ENCODE measurements at regions of chr2 and their contacts with region 1.

Region 1: DNA sequence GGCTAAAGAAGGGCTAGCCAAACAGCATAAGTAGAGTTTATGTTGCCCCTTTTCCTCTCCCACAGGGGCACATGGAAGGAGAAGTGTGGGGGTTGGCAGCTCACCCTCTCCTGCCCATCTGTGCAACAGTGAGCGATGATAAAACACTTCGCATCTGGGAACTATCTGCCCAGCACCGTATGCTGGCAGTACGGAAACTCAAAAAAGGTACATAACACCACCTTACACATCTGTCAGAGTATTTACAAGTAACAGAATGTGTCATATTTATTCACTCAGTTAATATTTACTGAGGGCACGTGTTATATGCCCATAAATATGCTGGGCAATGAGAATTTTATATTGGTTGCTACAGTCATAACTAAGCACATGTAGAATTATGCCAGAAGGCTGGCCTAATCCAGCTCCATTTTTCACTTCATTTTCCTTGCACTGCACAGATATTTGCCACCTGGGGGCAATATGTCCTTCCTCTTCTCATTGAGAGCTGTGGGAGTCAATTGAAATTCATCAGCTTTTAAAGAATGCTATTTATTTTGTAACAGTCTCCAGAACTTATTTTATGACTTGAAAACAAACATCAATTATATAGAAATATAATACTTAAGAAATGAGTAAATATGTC is 150.6 kb downstream of the RTN4 start:
- DNase-seq: no peak
- H3K4me3 Mint-ChIP-seq: no peak overlapping the region
- H3K27ac Mint-ChIP-seq: no peak overlapping the region
- H3K4me1 Mint-ChIP-seq: peaks cover 29% of the 10 kb centered on the region
- H3K27me3 Mint-ChIP-seq: no peaks in the 10 kb centered on the region

Region 2: GRCh38 chr2:54723131-54723995 is 176.3 kb before region 1 on chr2 and contains the start of gene EML6:
- CTCF ChIA-PET with region 1: no interaction called
- POLR2A ChIA-PET with region 1: no interaction called
- intact Hi-C with region 1: no loop called
- DNase-seq: peak; percentile 99
- H3K4me3 Mint-ChIP-seq: peak within 1 kb of the TSS; percentile 85
- H3K27ac Mint-ChIP-seq: peak within 1 kb of the TSS; percentile 34
- H3K4me1 Mint-ChIP-seq: peaks cover 12% of the 10 kb centered on the region
- H3K27me3 Mint-ChIP-seq: peaks cover 31% of the 10 kb centered on the region
- total RNA-seq, gene EML6: 0.46 to 0.50 TPM

Region 3: GRCh38 chr2:54866868-54867267 is 32.8 kb before region 1 on chr2:
- CTCF ChIA-PET with region 1: no interaction called
- POLR2A ChIA-PET with region 1: no interaction called
- intact Hi-C with region 1: no loop called
- DNase-seq: no peak
- H3K4me3 Mint-ChIP-seq: no peak overlapping the region
- H3K27ac Mint-ChIP-seq: no peak overlapping the region
- H3K4me1 Mint-ChIP-seq: peaks cover 12% of the 10 kb centered on the region
- H3K27me3 Mint-ChIP-seq: no peaks in the 10 kb centered on the region

Region 4: DNA sequence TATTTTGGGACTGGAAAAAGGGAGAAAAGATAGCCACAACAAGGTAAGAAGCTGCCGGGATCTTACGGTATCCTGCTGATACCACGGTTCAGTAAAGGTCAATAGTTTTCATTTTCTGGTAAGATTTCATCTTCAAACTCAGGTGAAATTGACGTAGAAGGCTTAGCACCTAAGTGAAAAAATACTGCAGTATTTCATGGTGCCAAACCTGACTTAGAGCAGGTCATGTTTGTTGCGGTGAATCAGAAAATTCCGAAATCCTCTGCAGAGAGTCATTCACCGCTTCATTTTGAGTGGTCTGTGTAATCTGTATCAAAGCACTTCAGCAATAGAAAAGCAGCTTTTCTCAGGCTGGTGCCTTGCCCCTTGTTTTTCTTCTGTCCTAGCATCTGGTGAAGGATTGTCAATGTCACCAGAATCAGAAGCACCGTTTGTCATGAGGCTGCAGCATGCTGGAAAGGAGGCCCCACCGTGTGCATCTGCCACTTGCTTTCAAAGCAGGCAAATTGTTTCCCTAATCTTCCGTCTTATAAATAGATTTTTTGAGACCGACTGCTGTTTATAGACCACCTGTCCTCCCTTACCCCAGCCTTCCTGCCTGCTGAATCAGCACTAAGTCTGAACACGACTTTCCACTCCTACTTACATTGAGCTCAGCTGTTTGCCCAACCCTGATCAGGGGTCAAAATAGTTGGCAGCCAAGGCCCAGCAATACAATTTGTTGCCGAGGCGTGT is 19.9 kb before region 1 on chr2:
- CTCF ChIA-PET with region 1: no interaction called
- POLR2A ChIA-PET with region 1: no interaction called
- intact Hi-C with region 1: no loop called
- DNase-seq: no peak
- H3K4me3 Mint-ChIP-seq: no peak overlapping the region
- H3K27ac Mint-ChIP-seq: no peak overlapping the region
- H3K4me1 Mint-ChIP-seq: no peaks in the 10 kb centered on the region
- H3K27me3 Mint-ChIP-seq: no peaks in the 10 kb centered on the region

Region 5: DNA sequence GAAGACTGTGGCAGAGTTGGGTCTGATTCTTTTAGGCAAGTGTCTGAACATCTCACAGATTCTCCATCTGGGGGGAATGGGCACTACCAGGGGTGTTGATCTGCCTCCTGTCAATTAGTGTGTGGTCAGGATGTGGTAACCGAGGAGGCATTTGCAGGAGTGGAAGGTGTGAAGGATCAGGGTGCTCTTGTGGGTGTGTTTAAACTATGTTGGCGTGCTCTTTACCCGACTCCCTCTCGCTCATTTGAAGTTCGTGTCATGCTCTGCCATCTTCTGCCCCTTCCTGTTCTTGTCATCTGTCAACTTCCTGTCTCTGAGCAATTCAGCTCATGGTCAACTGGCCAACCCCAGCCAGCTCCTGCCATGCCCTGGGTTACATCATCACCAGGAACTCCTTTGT is 42.7 kb after region 1 on chr2:
- CTCF ChIA-PET with region 1: interaction called, 3 read pairs
- POLR2A ChIA-PET with region 1: no interaction called
- intact Hi-C with region 1: loop called (anchors 5 kb)
- DNase-seq: peak; percentile 38
- H3K4me3 Mint-ChIP-seq: no peak overlapping the region
- H3K27ac Mint-ChIP-seq: no peak overlapping the region
- H3K4me1 Mint-ChIP-seq: peaks cover 6% of the 10 kb centered on the region
- H3K27me3 Mint-ChIP-seq: no peaks in the 10 kb centered on the region

Region 6: DNA sequence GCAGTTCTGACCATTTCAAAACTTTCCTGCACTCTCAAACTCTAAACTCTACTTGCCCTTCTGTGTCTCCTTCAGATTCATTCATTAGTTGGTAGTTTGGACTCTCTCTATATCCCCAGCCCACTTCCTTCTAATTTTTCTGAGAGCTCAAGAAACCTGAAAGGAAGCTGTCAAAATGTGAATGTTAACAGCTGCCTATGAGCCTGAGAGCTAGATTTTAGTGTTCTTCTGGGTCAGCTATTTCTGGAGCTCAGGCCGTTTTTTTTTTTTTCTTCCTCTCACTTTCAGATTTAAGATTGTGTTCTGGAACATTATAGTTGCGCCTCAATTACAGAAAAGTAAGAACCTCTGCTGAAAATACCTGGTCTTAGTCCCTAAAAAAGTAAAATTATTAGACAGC is 77.5 kb after region 1 on chr2:
- CTCF ChIA-PET with region 1: no interaction called
- POLR2A ChIA-PET with region 1: no interaction called
- intact Hi-C with region 1: no loop called
- DNase-seq: no peak
- H3K4me3 Mint-ChIP-seq: no peak overlapping the region
- H3K27ac Mint-ChIP-seq: no peak overlapping the region
- H3K4me1 Mint-ChIP-seq: peaks cover 34% of the 10 kb centered on the region
- H3K27me3 Mint-ChIP-seq: no peaks in the 10 kb centered on the region

Region 7: GRCh38 chr2:55010149-55010591 is 110.5 kb after region 1 on chr2:
- CTCF ChIA-PET with region 1: interaction called, 4 read pairs
- POLR2A ChIA-PET with region 1: no interaction called
- intact Hi-C with region 1: loop called (anchors 5 kb)
- DNase-seq: peak; percentile 40
- H3K4me3 Mint-ChIP-seq: peak overlapping the region; percentile 81
- H3K27ac Mint-ChIP-seq: peak overlapping the region; percentile 65
- H3K4me1 Mint-ChIP-seq: peaks cover 63% of the 10 kb centered on the region
- H3K27me3 Mint-ChIP-seq: no peaks in the 10 kb centered on the region

Region 8: DNA sequence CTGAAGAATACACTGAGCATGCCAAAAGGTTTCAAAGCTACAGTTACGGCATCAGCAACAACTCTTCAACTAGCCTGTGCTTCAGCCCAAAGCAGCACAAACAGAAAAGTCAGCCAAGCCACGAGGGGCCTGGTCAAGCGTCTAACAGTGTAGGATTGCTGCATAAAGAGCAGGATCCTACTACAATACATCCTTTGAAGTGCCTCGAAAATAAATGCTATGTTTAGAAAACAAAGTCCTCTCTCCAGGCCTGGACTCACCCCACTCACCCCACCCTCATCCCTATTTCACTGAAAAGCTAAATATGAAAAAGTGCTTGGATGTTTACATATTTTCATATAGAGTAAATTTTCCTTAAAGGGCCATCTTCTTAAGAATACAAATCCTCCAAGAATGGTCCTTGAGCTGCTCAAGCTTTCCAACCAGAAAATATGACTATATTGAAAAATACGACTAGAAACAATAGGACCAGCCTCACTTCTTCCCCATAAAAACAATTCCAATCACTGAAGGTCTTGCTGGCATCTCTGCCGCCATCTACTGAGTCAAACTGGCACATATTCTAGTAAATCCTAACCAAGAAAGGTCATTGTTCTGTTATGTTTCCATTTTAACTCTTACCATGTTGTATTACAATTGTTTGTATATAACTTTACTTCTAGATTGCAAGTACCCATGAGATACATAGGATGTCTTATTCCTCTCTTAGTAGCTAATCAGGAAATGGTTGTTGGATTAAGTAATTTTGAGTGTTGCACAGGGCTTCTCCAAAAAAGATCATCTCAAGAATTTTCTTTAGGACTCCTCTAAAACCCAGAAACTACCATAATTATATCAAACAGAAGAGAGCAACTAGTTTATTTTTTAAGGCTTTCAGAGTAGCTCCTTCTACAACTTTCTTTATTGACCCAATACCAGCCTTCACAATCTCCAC is 268.8 kb after region 1 on chr2:
- CTCF ChIA-PET with region 1: interaction called, 29 read pairs
- POLR2A ChIA-PET with region 1: no interaction called
- intact Hi-C with region 1: loop called (anchors 1 kb)
- DNase-seq: peak; percentile 45
- H3K4me3 Mint-ChIP-seq: no peak overlapping the region
- H3K27ac Mint-ChIP-seq: no peak overlapping the region
- H3K4me1 Mint-ChIP-seq: peaks cover 3% of the 10 kb centered on the region
- H3K27me3 Mint-ChIP-seq: no peaks in the 10 kb centered on the region

Region 9: DNA sequence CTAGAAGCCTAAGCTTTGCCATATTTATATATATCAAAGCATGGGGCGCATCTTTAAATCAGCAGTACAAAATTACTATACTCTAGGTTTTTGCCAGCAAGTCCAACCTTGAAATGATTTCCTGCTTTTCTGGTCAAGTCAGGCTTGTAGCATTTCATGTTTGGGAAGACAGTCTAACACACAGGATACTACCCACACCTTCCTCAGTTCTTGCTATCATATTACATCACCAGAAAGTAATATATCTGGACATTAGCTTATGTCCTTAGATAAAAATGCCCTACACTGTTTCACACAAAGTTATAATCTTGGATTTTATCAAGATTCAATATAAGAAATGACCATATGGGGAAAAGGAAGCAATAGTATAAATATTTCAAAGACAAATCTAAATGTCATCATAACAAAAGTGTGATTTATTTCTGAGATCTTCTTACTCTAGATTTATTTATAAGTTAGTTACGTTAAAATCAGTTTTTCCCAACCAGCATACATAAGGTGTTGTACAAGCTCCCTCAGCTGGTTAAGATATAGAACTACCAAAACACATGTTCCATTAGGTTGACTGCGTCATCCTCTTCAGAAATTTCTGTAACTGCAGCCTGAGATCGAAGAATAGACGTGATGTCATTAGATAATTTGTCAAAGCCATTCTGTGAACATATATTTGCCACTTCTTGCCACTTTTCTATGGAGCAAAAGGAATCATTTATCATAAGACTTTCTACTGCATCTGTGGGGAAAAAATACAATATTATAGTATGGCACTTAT is 275.8 kb after region 1 on chr2:
- CTCF ChIA-PET with region 1: interaction called, 29 read pairs
- POLR2A ChIA-PET with region 1: no interaction called
- intact Hi-C with region 1: loop called (anchors 1 kb)
- DNase-seq: no peak
- H3K4me3 Mint-ChIP-seq: no peak overlapping the region
- H3K27ac Mint-ChIP-seq: no peak overlapping the region
- H3K4me1 Mint-ChIP-seq: peaks cover 10% of the 10 kb centered on the region
- H3K27me3 Mint-ChIP-seq: no peaks in the 10 kb centered on the region